ENCODE measurements at regions of chr17 and their contacts with region 1.

Region 1: DNA sequence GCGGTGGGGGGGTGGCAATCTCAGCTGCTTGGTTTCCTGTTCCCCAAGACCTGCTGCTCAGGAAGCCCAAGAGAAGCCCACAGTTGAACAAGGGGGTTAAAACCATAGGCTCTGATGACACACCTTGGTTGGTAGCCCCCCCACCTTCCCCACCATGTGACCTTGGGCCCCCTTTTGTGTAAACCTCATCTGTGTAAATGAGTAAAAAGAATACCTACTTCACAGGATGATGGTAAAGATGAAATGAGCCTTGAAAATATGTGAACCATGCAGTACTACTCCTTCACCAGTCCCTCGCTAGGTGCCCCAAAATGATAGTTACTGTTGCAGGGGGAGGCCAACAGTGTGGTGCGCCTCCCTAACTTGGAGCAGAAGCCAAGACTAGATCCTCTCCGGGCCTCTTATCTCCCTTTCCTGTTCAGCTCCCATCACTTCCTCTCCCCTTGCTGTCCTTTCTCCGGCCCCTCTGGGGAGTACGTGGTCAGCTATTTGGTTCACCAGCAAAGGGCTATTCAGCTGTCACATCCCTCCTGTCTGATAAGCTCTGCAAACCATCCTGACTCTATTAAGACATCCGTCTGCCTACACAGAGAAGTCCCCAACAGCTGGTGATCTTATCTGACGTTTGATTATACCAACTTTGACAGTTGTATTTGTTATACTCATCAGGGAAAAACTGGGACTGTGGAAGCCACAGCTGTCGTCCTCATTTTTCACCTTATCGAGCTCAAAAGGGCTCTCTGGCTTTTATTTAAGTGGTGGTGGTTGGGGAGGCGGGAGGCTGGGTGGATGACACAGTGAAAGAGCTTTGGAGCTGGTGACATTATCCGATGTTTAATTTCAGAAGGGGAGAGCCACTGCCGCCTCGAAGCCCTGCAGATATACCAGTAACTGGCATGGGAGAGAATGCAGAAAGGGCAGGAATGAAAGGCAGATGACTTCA is 19.9 kb downstream of the DCAKD start:
- DNase-seq: peak; percentile 90
- H3K4me3 ChIP-seq: no peak overlapping the region
- H3K27ac ChIP-seq: peak overlapping the region; percentile 42 to 96; a peak in 3 of 4 replicates
- H3K4me1 ChIP-seq: peaks cover 0 to 39% of the 10 kb centered on the region in 2 experiments; a peak in 2 of 4 replicates
- H3K27me3 ChIP-seq: no peaks in the 10 kb centered on the region
- CTCF ChIP-seq: no peak
- EP300 ChIP-seq: peak in 1 of 2 experiments; percentile 96; a peak in 2 of 4 replicates
- RAD21 ChIP-seq: peak; percentile 44; the same call in 1 of the 2 replicates

Region 2: GRCh38 chr17:45051060-45051719 is 19.7 kb after region 1 on chr17 and contains the start of gene DCAKD:
- CTCF ChIA-PET with region 1: interaction called, 6 read pairs
- POLR2A ChIA-PET with region 1: interaction called, 12 read pairs
- DNase-seq: peak; percentile 96
- H3K4me3 ChIP-seq: peak within 1 kb of the TSS; percentile 60 to 79
- H3K27ac ChIP-seq: peak within 1 kb of the TSS; percentile 92
- H3K4me1 ChIP-seq: no peaks in the 10 kb centered on the region; a peak in 1 of 4 replicates
- H3K27me3 ChIP-seq: no peaks in the 10 kb centered on the region
- CTCF ChIP-seq: no peak
- EP300 ChIP-seq: no peak
- RAD21 ChIP-seq: no peak
- polyA plus RNA-seq, gene DCAKD: 47.6 and 48.8 TPM in 2 replicates

Region 3: GRCh38 chr17:45060797-45061605 is 29.5 kb after region 1 on chr17 and contains the start of gene NMT1:
- CTCF ChIA-PET with region 1: interaction called, 3 read pairs
- POLR2A ChIA-PET with region 1: interaction called, 10 read pairs
- DNase-seq: peak; percentile 89
- H3K4me3 ChIP-seq: peak within 1 kb of the TSS; percentile 70 to 93
- H3K27ac ChIP-seq: peak within 1 kb of the TSS; percentile 86 to 87
- H3K4me1 ChIP-seq: peaks cover 5 to 7% of the 10 kb centered on the region in 2 experiments; a peak in 1 of 4 replicates
- H3K27me3 ChIP-seq: no peaks in the 10 kb centered on the region
- CTCF ChIP-seq: no peak
- EP300 ChIP-seq: no peak
- RAD21 ChIP-seq: no peak
- polyA plus RNA-seq, gene NMT1: 30.1 and 31.6 TPM in 2 replicates

Region 4: GRCh38 chr17:45172454-45173286 is 141.2 kb after region 1 on chr17:
- CTCF ChIA-PET with region 1: no interaction called
- POLR2A ChIA-PET with region 1: no interaction called
- DNase-seq: peak; percentile 93
- H3K4me3 ChIP-seq: peak overlapping the region; percentile 25 to 30; a peak in 3 of 4 replicates
- H3K27ac ChIP-seq: peak overlapping the region; percentile 89 to 94
- H3K4me1 ChIP-seq: peaks cover 29 to 40% of the 10 kb centered on the region in 2 experiments; a peak in 3 of 4 replicates
- H3K27me3 ChIP-seq: no peaks in the 10 kb centered on the region
- CTCF ChIP-seq: peak; percentile 28; the same call in 1 of the 2 replicates
- EP300 ChIP-seq: peak; percentile 34 to 66; a peak in 2 of 4 replicates
- RAD21 ChIP-seq: peak; percentile 6; the same call in 1 of the 2 replicates